Heart left ventricle (tissue), 16 donors: ENCODE measurements at regions of chr18 and their contacts with region 1.

Region 1: DNA sequence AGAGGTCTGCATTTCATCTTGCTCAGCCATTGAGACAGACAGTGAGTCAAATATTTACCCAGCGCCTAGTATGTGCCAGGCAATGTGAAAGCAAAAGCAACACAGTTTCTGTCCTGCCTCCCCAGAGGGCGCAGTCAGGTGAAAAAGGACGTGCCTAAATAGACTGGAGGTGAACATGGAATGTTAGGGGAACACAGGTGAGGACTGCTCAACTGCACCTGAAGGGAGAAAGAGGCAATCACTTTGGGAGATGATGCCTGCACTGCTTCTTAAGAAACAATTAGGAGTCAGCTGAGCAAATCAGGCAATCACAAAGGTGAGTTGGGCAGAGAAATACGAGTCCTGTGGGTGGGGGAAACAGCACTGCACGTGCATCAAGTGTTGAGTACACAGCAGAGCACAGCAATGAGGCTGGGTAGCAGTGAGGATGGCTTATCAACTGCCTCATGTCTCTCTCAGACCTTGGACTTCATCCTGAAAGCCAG is 218.3 kb upstream of the SMAD7 start:
- DNase-seq: no peak
- ATAC-seq: peak in 1 of 4 donors; percentile 15
- H3K4me3 ChIP-seq: no peak overlapping the region
- H3K27ac ChIP-seq: no peak overlapping the region
- H3K4me1 ChIP-seq: peaks cover 0 to 27% (median 0%) of the 10 kb centered on the region in 12 donors
- H3K27me3 ChIP-seq: no peaks in the 10 kb centered on the region
- CTCF ChIP-seq: no peak
- POLR2A ChIP-seq: no peak

Region 2: GRCh38 chr18:48693625-48694262 is 475.3 kb before region 1 on chr18:
- intact Hi-C with region 1: loop called in 1 of 10 experiments (anchors 10 kb)
- DNase-seq: no peak
- ATAC-seq: no peak
- H3K4me3 ChIP-seq: no peak overlapping the region
- H3K27ac ChIP-seq: no peak overlapping the region
- H3K4me1 ChIP-seq: peaks cover 0 to 47% (median 18%) of the 10 kb centered on the region in 12 donors
- H3K27me3 ChIP-seq: no peaks in the 10 kb centered on the region
- CTCF ChIP-seq: no peak
- POLR2A ChIP-seq: no peak